ENCODE measurements at regions of chr17 and their contacts with region 1.

Region 1: GRCh38 chr17:31524926-31525800 is 133.7 kb downstream of the RAB11FIP4 start:
- DNase-seq: peak; percentile 82
- H3K4me3 ChIP-seq: peak overlapping the region; percentile 14
- H3K27ac ChIP-seq: no peak overlapping the region
- H3K4me1 ChIP-seq: peaks cover 11% of the 10 kb centered on the region
- CTCF ChIP-seq: peak; percentile 90

Region 2: GRCh38 chr17:31388770-31389661 is 136.1 kb before region 1 on chr17:
- CTCF ChIA-PET with region 1: no interaction called
- POLR2A ChIA-PET with region 1: no interaction called
- intact Hi-C with region 1: loop called (anchors 1 kb)
- DNase-seq: peak; percentile 48
- H3K4me3 ChIP-seq: no peak overlapping the region
- H3K27ac ChIP-seq: no peak overlapping the region
- H3K4me1 ChIP-seq: no peaks in the 10 kb centered on the region
- CTCF ChIP-seq: peak; percentile 85

Region 3: DNA sequence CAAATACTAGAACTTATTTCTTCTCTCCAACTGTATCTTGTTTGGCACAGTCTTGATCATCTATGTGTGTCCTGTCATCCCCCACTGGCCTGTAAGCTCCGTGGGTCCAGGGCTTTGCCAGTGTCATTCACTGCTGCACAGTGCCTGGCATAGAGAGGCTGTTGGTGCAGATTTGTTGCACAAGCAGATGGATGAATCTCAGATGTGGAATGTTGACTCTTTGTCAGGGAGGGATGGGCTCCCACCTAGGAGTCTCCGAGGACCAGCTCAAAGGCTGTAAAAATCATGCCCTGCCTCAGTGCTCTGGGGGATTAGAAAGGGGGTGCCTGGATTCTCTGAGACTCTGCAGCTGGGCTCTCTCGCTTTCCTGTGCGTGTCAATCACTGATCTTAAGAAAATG is 73.1 kb before region 1 on chr17:
- CTCF ChIA-PET with region 1: no interaction called
- POLR2A ChIA-PET with region 1: no interaction called
- intact Hi-C with region 1: no loop called
- DNase-seq: no peak
- H3K4me3 ChIP-seq: no peak overlapping the region
- H3K27ac ChIP-seq: no peak overlapping the region
- H3K4me1 ChIP-seq: no peaks in the 10 kb centered on the region
- CTCF ChIP-seq: no peak

Region 4: DNA sequence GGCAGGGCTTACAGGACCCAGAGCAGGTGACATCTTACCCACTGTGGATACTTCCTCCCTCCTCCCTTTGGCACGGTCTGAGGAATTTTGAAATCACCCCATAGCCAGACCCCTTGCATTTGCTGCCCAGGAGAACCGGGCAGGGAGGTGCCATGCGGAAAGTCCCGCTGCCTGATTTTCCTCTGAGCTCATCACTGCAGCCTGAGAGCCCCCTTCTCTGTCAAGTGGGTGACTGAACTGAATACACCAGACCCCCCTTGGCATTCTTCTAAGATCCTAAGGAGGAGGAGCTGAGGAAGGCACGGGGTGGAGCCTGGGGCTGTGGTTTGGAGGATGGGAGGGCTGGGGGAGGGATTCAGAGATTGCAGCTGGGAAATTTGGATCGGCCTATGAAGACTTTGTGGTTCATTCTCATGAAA is 39.7 kb after region 1 on chr17:
- CTCF ChIA-PET with region 1: no interaction called
- POLR2A ChIA-PET with region 1: no interaction called
- intact Hi-C with region 1: no loop called
- DNase-seq: no peak
- H3K4me3 ChIP-seq: no peak overlapping the region
- H3K27ac ChIP-seq: no peak overlapping the region
- H3K4me1 ChIP-seq: peaks cover 20% of the 10 kb centered on the region
- CTCF ChIP-seq: no peak

Measured in OCI-LY7 (cell line).